ENCODE measurements at regions of chr1 and their contacts with region 1.

Region 1: GRCh38 chr1:67535474-67535873 is 105.3 kb upstream of the SERBP1 start:
- DNase-seq: peak; percentile 75 to 90 (median 88)
- ATAC-seq: peak; percentile 60 to 77
- H3K4me3 ChIP-seq: no peak overlapping the region
- H3K27ac ChIP-seq: no peak overlapping the region
- H3K4me1 ChIP-seq: no peaks in the 10 kb centered on the region
- H3K27me3 ChIP-seq: no peaks in the 10 kb centered on the region

Region 2: GRCh38 chr1:67760030-67760821 is 224.8 kb after region 1 on chr1:
- intact Hi-C with region 1: loop called (anchors 2 to 5 kb)
- DNase-seq: peak; percentile 40 to 82 (median 66)
- ATAC-seq: peak; percentile 77 to 79
- H3K4me3 ChIP-seq: no peak overlapping the region
- H3K27ac ChIP-seq: no peak overlapping the region
- H3K4me1 ChIP-seq: no peaks in the 10 kb centered on the region
- H3K27me3 ChIP-seq: no peaks in the 10 kb centered on the region

Region 3: DNA sequence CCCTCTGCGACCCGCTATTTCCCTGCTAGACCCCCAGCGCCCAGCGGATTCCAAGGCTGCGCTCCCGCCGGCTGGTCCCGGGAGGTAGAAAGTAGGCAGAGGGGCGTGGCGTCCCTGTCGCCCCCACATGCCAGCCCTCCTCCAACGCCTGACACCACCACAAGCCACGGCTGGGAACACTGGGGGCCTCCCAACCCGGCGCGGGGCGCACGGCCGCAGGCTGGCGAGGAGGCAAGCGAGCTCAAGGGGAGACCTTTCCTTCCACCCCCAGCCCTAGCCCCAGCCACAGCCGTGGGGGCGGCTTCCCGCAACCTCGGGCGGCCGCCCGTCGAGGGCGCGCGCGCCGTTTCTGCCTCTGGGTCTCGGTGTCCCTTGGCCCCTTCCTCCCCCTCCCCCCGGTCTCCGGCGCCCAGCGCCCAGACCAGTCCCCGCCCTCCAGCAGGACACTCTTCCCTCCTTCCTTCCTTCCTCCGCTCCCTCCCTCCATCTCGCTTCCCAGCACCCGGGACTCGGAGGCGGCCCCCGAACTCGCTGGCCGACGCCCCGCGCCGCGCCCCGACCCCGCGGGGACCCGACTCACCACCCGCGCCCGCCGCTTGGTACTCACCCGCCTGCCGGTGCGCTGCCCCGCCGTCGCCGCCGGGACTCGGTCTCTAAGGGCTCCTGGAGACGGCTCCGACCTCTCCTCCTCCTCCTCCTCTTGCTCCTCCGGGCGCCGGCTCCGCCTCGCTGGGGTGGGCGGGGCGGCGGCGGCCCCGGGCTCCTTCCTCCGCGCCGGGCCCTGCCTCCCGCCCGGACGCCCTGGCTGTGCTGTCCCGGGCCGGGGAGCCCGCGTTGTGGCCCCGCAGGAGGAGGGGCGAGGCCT is 297.5 kb after region 1 on chr1 and contains the start of gene GNG12:
- intact Hi-C with region 1: loop called in 1 of 4 experiments (anchors 10 kb)
- DNase-seq: peak; percentile 82 to 90 (median 89)
- ATAC-seq: peak; percentile 93 to 94
- H3K4me3 ChIP-seq: peak within 1 kb of the TSS; percentile 59
- H3K27ac ChIP-seq: peak within 1 kb of the TSS; percentile 57
- H3K4me1 ChIP-seq: no peaks in the 10 kb centered on the region
- H3K27me3 ChIP-seq: no peaks in the 10 kb centered on the region
- total RNA-seq, gene GNG12: 30.1 to 44.9 (median 32.1) TPM

Region 4: GRCh38 chr1:67840449-67840848 is 305.0 kb after region 1 on chr1:
- intact Hi-C with region 1: loop called in 2 of 4 experiments (anchors 5 to 10 kb)
- DNase-seq: no peak
- ATAC-seq: peak; percentile 70 to 74
- H3K4me3 ChIP-seq: no peak overlapping the region
- H3K27ac ChIP-seq: no peak overlapping the region
- H3K4me1 ChIP-seq: peaks cover 3% of the 10 kb centered on the region
- H3K27me3 ChIP-seq: no peaks in the 10 kb centered on the region

Measured in right cardiac atrium (tissue), 5 donors.